ENCODE measurements at regions of chr2 and their contacts with region 1.

Region 1: GRCh38 chr2:111975053-111975552 is 76.7 kb downstream of the MERTK start:
- DNase-seq: peak; percentile 97
- ATAC-seq: peak; percentile 100
- H3K4me3 ChIP-seq: no peak overlapping the region
- H3K27ac ChIP-seq: no peak overlapping the region
- H3K4me1 ChIP-seq: peaks cover 33% of the 10 kb centered on the region
- H3K27me3 ChIP-seq: no peaks in the 10 kb centered on the region
- CTCF ChIP-seq: no peak

Region 2: DNA sequence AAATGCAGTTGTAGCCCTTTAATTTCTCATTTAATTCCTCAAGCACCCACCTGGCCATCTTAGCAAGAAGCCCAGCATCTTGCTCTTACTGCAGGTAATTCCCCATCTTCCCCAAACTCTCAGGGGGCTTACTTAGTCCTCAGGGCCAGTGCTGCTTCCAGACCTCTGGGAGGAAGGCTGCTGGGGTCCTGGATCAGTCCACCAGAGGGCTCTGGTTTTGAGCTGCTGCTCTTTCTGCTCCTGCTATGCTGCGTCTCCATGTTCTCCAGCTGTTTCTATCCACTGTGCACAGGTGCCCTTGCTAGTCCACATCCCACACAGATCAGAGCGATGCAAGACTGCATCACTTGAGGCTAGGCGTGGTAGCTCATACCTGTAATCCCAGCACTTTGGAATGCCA is 45.5 kb after region 1 on chr2:
- CTCF ChIA-PET with region 1: no interaction called
- POLR2A ChIA-PET with region 1: no interaction called
- intact Hi-C with region 1: loop called (anchors 2 kb)
- DNase-seq: no peak
- ATAC-seq: no peak
- H3K4me3 ChIP-seq: no peak overlapping the region
- H3K27ac ChIP-seq: no peak overlapping the region
- H3K4me1 ChIP-seq: peaks cover 30% of the 10 kb centered on the region
- H3K27me3 ChIP-seq: no peaks in the 10 kb centered on the region
- CTCF ChIP-seq: peak; percentile 39; the same call in 1 of the 2 replicates